BJ (cell line): ENCODE measurements at regions of chr6 and their contacts with region 1.

Region 1: DNA sequence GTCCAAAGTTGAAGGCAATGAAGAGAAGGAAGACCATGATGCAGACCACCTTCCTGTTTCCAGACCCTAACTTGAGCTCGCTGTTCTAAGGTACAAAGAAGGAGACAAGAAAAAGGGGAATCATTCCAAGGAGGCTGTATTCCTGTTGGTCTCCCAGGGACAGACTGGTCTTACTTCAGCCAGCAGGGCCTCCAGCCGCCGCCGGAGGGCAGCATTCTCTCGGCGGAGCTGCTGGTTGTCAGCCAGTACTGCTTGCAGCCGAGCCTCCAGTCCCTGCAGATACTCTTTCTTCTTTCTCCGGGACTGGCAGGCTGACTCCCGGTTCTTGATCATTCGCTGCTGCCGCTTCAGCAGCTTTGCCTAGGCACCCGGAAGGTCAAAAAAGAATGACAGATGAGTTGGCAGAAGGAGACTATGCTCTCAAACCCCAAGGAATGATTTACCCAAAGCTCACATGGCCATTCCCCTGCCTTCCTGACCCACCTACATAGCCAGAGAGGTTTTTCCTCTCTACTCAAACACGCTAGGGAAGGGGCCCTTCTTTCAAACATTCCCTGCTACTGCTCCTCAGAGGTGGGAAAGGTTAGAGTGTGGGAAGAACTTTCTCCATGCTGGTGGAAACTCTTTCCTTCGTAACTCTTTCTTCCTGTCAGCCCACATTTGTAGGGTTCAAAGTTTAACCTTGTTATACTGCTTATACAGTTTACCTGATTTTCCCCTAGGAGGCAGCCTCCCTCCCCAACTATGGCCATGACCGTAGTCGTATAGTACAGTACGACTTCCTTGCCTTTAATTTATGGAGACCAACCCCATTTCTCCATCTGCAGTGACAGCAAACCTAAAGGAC is 9.0 kb downstream of the ATF6B start:
- DNase-seq: no peak
- H3K4me3 ChIP-seq: no peak overlapping the region
- H3K27me3 ChIP-seq: no peaks in the 10 kb centered on the region
- CTCF ChIP-seq: peak; percentile 96

Region 2: GRCh38 chr6:31827286-31828079 is 291.5 kb before region 1 on chr6 and contains the start of gene HSPA1B:
- CTCF ChIA-PET with region 1: no interaction called
- POLR2A ChIA-PET with region 1: no interaction called
- DNase-seq: peak; percentile 100
- H3K4me3 ChIP-seq: peak within 1 kb of the TSS; percentile 52
- H3K27me3 ChIP-seq: no peaks in the 10 kb centered on the region
- CTCF ChIP-seq: no peak
- polyA plus RNA-seq, gene HSPA1B: 20.9 and 42.8 TPM in 2 replicates

Region 3: GRCh38 chr6:31940256-31940664 is 178.7 kb before region 1 on chr6:
- CTCF ChIA-PET with region 1: no interaction called
- POLR2A ChIA-PET with region 1: no interaction called
- DNase-seq: no peak
- H3K4me3 ChIP-seq: no peak overlapping the region
- H3K27me3 ChIP-seq: peaks cover 1% of the 10 kb centered on the region
- CTCF ChIP-seq: peak; percentile 16; the same call in 1 of the 2 replicates

Region 4: DNA sequence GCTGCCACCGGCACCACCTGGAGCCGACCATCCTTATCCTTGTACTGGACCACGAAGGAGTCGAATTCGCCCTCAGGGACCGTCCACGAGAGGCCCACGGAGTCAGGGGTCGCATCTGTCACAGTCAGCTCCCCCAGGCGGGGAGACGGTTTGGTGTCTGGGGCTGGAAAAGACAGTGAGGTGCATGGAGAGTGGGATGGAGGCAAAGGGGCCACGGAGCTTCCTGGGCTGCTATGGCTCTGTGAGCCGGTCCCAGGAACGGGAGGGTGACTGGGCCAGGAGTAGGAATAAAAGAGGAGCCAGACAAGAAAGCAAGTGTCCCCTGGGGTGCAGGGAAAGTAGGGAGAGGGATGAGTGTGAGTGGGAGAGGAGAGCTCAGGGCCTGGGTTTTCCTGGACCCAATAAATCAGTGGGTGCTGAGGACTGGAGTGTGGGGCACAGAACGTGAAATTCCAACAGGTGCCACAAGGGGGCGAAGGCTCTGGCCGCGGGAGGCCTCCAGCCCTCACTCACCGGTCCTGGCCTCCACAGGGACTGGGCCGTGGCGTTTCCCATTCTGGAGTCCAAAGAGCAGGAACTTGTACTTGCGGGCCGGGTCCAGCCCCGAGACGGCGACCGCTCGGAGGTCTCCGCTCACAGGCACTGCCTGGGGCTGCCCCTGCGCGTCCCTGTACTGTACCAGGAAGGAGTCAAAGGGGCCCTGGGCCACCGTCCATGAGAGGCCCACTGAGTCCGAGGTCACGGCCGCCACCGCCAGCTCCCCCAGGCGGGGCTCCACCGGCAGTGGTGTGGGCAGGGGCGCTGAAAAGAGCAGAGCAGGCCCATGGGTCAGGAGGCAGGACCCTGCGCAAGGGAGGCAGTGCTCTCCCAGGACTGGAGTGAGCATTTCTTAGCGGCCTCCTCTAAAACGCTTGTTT is 70.9 kb before region 1 on chr6:
- CTCF ChIA-PET with region 1: interaction called, 30 read pairs
- POLR2A ChIA-PET with region 1: no interaction called
- DNase-seq: no peak
- H3K4me3 ChIP-seq: no peak overlapping the region
- H3K27me3 ChIP-seq: peaks cover 2% of the 10 kb centered on the region
- CTCF ChIP-seq: peak; percentile 87

Region 5: GRCh38 chr6:32087574-32088486 is 31.2 kb before region 1 on chr6:
- CTCF ChIA-PET with region 1: interaction called, 18 read pairs
- POLR2A ChIA-PET with region 1: no interaction called
- DNase-seq: no peak
- H3K4me3 ChIP-seq: no peak overlapping the region
- H3K27me3 ChIP-seq: peaks cover 28% of the 10 kb centered on the region
- CTCF ChIP-seq: peak; percentile 66

Region 6: GRCh38 chr6:32102255-32102654 is 16.8 kb before region 1 on chr6:
- CTCF ChIA-PET with region 1: interaction called, 11 read pairs
- POLR2A ChIA-PET with region 1: no interaction called
- DNase-seq: no peak
- H3K4me3 ChIP-seq: no peak overlapping the region
- H3K27me3 ChIP-seq: peaks cover 11% of the 10 kb centered on the region
- CTCF ChIP-seq: no peak

Region 7: GRCh38 chr6:32153564-32154513 is 34.8 kb after region 1 on chr6 and contains the start of gene PPT2:
- CTCF ChIA-PET with region 1: interaction called, 16 read pairs
- POLR2A ChIA-PET with region 1: no interaction called
- DNase-seq: peak; percentile 60
- H3K4me3 ChIP-seq: peak within 1 kb of the TSS; percentile 71
- H3K27me3 ChIP-seq: no peaks in the 10 kb centered on the region
- CTCF ChIP-seq: peak; percentile 43
- polyA plus RNA-seq, gene PPT2: 24.2 and 31.9 TPM in 2 replicates

Region 8: GRCh38 chr6:32195652-32195901 is 76.6 kb after region 1 on chr6:
- CTCF ChIA-PET with region 1: interaction called, 10 read pairs
- POLR2A ChIA-PET with region 1: no interaction called
- DNase-seq: peak; percentile 99
- H3K4me3 ChIP-seq: peak overlapping the region; percentile 81
- H3K27me3 ChIP-seq: no peaks in the 10 kb centered on the region
- CTCF ChIP-seq: peak; percentile 62

Region 9: DNA sequence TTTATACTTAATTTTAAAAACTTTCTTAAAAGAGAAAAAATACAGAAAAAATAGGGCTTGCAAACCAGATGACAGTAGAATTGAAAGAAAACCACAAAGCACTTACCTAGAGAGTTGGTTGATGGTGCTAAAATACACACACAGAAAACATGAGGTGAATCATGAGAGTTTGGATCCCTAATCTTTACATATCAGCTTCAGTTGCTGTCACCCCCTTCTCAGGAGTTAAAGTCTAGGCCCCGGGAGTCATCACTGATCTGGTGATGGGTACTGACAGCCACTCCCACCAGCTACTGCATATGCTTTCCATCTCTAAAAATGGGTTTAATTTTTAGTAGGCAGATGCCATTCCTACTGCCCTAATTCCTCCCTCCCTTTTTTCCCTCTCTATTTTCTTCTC is 236.0 kb after region 1 on chr6:
- CTCF ChIA-PET with region 1: no interaction called
- POLR2A ChIA-PET with region 1: no interaction called
- DNase-seq: no peak
- H3K4me3 ChIP-seq: no peak overlapping the region
- H3K27me3 ChIP-seq: no peaks in the 10 kb centered on the region
- CTCF ChIP-seq: no peak